IMR-90 (cell line): ENCODE measurements at regions of chr7 and their contacts with region 1.

Region 1: DNA sequence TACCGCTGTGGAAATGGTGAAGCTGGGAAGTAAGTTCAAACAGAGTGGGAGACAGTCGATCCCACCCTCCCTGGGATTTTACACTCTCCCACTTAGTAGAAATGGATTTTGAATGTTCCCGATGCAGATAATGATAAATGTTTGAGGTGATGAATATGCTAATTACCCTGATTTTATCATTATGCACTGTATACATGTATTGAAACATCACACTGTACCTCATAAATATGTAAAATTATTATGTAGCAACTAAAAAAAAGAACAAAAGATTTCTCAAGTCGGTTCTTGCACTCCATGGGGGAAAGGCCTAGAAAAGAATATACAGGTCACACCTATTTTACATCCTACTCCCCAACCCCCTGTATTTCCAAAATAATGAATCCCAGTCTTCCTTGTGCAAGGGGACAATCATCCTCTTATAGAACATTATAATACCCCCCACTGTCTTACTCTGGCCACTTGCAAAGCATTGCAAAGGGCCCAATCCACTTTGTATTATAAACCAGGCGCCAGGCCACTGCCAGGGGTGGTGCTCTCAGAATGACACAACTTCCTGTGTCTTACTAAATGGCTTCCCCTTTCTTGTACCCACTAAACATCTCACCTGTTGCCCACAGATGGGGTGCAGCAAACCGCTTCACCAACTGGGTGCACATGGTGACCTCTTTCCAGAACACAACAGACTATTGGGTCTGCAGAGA is 20.6 kb upstream of the OR2AE1 start:
- DNase-seq: no peak
- ATAC-seq: no peak
- H3K4me3 ChIP-seq: no peak overlapping the region
- H3K27ac ChIP-seq: no peak overlapping the region
- H3K4me1 ChIP-seq: no peaks in the 10 kb centered on the region
- H3K27me3 ChIP-seq: no peaks in the 10 kb centered on the region
- CTCF ChIP-seq: no peak
- POLR2A ChIP-seq: no peak
- RAD21 ChIP-seq: no peak

Region 2: GRCh38 chr7:99631295-99632109 is 266.0 kb before region 1 on chr7:
- CTCF ChIA-PET with region 1: no interaction called
- POLR2A ChIA-PET with region 1: no interaction called
- dilution Hi-C with region 1: no loop called
- in situ Hi-C with region 1: no loop called
- intact Hi-C with region 1: loop called (anchors 10 kb)
- DNase-seq: peak; percentile 13
- ATAC-seq: peak; percentile 63
- H3K4me3 ChIP-seq: no peak overlapping the region
- H3K27ac ChIP-seq: no peak overlapping the region
- H3K4me1 ChIP-seq: no peaks in the 10 kb centered on the region
- H3K27me3 ChIP-seq: no peaks in the 10 kb centered on the region
- CTCF ChIP-seq: 0 out of 2 replicates have a peak, but pooled peaks have one; percentile 17
- POLR2A ChIP-seq: no peak
- RAD21 ChIP-seq: no peak